ENCODE measurements at regions of chr5 and their contacts with region 1.

Region 1: GRCh38 chr5:154478224-154478565 is at the start of gene HAND1:
- ATAC-seq: peak in 7 of 8 experiments; percentile 44 to 80 (median 61)
- H3K4me3 ChIP-seq: peak within 1 kb of the TSS in 4 of 5 donors; percentile 3 to 25 (median 16)
- H3K27ac ChIP-seq: no peak within 1 kb of the TSS
- H3K4me1 ChIP-seq: peaks cover 5 to 20% of the 10 kb centered on the region in 2 donors
- total RNA-seq, gene HAND1: 0.05 to 0.38 (median 0.25) TPM in 4 of 8 experiments, not detected in the others

Region 2: DNA sequence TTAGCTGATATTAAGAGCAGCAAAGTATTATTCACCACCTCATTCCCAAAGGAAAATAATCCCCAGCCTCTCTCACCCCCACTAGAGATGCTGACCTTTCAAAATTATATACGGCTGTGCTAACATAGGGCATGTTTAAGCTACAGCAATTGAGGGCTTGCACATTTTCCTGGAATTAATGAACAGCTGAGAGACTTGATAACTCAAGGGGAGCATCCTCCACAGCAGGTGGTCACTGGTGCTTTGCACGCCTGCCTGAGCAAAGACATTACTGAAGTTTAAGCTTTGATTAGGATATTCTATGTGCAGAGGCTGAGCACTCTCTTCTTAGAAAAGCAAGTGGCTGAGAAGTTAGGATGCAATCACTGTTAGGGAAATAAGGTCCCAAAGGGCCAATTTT is 670.4 kb before region 1 on chr5:
- in situ Hi-C with region 1: no loop called
- ATAC-seq: peak in 2 of 8 experiments; percentile 24 to 34
- H3K4me3 ChIP-seq: no peak overlapping the region
- H3K27ac ChIP-seq: peak overlapping the region in 1 of 2 donors; percentile 3
- H3K4me1 ChIP-seq: peaks cover 9 to 16% of the 10 kb centered on the region in 2 donors

Region 3: GRCh38 chr5:154603978-154604679 is 125.9 kb after region 1 on chr5:
- in situ Hi-C with region 1: loop called in 7 of 9 experiments (anchors 10 to 25 kb)
- ATAC-seq: peak; percentile 47 to 69 (median 61)
- H3K4me3 ChIP-seq: no peak overlapping the region
- H3K27ac ChIP-seq: no peak overlapping the region
- H3K4me1 ChIP-seq: no peaks in the 10 kb centered on the region

Region 4: GRCh38 chr5:154610321-154611154 is 132.3 kb after region 1 on chr5:
- in situ Hi-C with region 1: loop called in 7 of 9 experiments (anchors 10 to 25 kb)
- ATAC-seq: peak; percentile 91 to 97 (median 96)
- H3K4me3 ChIP-seq: peak overlapping the region in 3 of 5 donors; percentile 2 to 25 (median 20)
- H3K27ac ChIP-seq: no peak overlapping the region
- H3K4me1 ChIP-seq: peaks cover 0 to 9% of the 10 kb centered on the region in 2 donors